ENCODE measurements at regions of chr5 and their contacts with region 1.

Region 1: GRCh38 chr5:93620487-93621326 is 37.7 kb downstream of the NR2F1 start:
- ATAC-seq: peak; percentile 65 to 96 (median 70)
- H3K4me3 ChIP-seq: peak overlapping the region; percentile 55 to 77 (median 59)
- H3K27ac ChIP-seq: peak overlapping the region; percentile 92 to 93
- H3K4me1 ChIP-seq: peaks cover 12 to 36% of the 10 kb centered on the region in 2 donors

Region 2: GRCh38 chr5:93789173-93790070 is 168.7 kb after region 1 on chr5:
- in situ Hi-C with region 1: loop called in 7 of 9 experiments (anchors 10 to 25 kb)
- ATAC-seq: peak in 7 of 8 experiments; percentile 41 to 93 (median 66)
- H3K4me3 ChIP-seq: no peak overlapping the region
- H3K27ac ChIP-seq: no peak overlapping the region
- H3K4me1 ChIP-seq: no peaks in the 10 kb centered on the region

Region 3: GRCh38 chr5:93899026-93899600 is 278.4 kb after region 1 on chr5:
- in situ Hi-C with region 1: loop called in 2 of 9 experiments (anchors 25 kb)
- ATAC-seq: no peak
- H3K4me3 ChIP-seq: no peak overlapping the region
- H3K27ac ChIP-seq: no peak overlapping the region
- H3K4me1 ChIP-seq: peaks cover 13 to 14% of the 10 kb centered on the region in 2 donors

Region 4: GRCh38 chr5:94072116-94072515 is 451.4 kb after region 1 on chr5:
- in situ Hi-C with region 1: loop called in 1 of 9 experiments (anchors 25 kb)
- ATAC-seq: no peak
- H3K4me3 ChIP-seq: no peak overlapping the region
- H3K27ac ChIP-seq: no peak overlapping the region
- H3K4me1 ChIP-seq: no peaks in the 10 kb centered on the region

Region 5: DNA sequence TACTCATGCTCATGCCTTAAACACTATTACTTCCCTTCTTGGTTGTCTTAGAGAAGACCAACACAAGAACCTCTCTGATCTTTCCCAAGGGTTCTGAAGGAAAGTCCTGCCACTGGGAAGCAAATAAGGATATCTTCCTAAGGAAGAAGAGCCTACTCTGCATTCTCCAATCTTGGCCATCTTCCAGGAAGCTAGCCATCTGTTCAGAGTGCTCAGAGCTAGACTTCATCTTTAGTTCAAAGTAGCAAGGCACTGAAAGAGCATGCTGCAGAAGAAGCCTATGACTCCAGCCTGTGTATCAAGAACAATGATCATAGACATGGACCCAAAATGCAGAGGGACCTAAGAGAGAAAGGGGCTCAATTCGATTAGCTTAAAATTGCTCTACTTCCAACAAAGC is 883.0 kb after region 1 on chr5:
- in situ Hi-C with region 1: no loop called
- ATAC-seq: no peak
- H3K4me3 ChIP-seq: no peak overlapping the region
- H3K27ac ChIP-seq: no peak overlapping the region
- H3K4me1 ChIP-seq: peaks cover 0 to 9% of the 10 kb centered on the region in 2 donors

Region 6: DNA sequence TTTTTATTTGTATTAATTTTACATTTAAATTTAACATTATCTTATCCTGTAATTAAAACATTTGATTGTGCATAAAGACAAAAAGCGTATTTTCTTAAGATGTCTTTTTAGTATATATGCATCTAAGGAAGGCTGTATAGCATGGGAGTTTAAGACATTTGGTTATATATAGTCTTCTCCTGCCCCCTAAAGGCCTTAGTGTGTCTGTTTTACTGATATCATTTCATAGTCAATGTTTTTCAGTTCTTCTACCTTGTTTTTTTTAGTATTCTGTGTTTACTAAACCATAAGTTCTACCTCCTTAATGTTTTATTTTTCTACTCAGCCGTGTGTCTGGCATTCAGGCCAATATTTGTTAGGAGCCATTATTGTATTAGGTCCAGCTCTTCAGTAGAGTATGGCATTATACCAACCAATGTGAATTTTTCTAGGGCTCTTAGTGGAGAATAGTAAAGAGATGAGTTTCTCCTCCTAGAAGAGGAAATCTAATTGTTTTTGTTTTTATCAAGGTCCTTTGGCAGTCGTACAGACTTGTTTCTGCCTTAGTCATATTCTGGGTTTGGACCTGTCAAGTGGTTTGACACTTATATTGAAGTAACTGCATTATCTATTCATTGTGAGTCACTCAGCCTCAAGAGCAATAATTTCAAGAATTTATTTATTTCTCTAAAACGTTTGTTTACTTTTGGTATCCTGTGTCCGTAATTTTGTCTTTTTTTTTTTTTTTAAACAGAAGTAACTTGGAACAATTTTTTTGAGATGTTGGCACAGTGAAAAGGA is 1072.5 kb after region 1 on chr5:
- in situ Hi-C with region 1: loop called in 1 of 9 experiments (anchors 25 kb)
- ATAC-seq: peak; percentile 60 to 90 (median 76)
- H3K4me3 ChIP-seq: peak overlapping the region in 2 of 5 donors; percentile 1 to 6
- H3K27ac ChIP-seq: no peak overlapping the region
- H3K4me1 ChIP-seq: peaks cover 22 to 29% of the 10 kb centered on the region in 2 donors

Region 7: DNA sequence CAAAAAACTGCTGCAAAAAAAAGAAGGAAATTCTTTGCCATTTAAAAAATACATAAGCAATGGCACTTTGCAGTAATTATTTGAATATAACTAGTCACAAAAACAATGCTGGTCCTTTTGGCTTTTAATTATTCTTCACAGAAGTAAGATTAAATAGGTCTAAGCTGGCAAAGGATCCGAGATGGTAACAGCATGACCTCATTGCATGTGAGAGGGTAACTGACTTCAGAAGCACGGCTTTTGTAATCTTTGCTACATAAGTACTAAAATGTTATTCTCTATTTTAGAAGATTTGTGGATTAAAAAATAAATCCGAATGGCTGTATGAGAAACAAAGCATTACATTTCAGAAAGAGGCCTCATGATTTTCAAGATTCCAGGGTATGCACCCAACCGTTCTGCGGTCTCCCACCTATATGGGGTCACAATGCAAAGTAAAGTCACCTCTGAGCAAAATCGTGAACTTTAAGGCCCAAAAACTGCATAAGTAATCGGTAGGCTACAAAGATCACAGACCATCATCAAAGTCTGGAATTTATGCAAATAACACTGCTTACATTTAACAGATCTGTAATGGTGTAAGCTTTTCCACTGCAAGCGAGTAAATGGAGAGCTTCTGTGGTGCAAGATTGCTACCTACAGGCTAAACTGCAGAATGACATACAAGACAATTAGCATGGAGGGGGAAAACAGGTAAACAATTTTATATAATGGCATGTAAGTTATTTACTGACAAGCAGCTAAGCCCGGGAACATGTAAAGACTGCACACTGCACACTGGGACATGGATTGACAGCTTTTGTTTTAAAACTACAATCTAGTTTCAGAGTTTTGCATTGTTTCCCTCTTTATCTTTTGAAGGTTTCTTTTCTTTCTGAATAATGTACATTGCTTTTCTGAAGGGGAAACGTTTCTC is 1229.4 kb after region 1 on chr5:
- in situ Hi-C with region 1: loop called in 1 of 9 experiments (anchors 25 kb)
- ATAC-seq: peak; percentile 82 to 98 (median 89)
- H3K4me3 ChIP-seq: no peak overlapping the region
- H3K27ac ChIP-seq: no peak overlapping the region
- H3K4me1 ChIP-seq: peaks cover 10 to 20% of the 10 kb centered on the region in 2 donors

Measured in motor neuron (in vitro differentiated cells).